G401 (cell line): ENCODE measurements at regions of chr20 and their contacts with region 1.

Region 1: DNA sequence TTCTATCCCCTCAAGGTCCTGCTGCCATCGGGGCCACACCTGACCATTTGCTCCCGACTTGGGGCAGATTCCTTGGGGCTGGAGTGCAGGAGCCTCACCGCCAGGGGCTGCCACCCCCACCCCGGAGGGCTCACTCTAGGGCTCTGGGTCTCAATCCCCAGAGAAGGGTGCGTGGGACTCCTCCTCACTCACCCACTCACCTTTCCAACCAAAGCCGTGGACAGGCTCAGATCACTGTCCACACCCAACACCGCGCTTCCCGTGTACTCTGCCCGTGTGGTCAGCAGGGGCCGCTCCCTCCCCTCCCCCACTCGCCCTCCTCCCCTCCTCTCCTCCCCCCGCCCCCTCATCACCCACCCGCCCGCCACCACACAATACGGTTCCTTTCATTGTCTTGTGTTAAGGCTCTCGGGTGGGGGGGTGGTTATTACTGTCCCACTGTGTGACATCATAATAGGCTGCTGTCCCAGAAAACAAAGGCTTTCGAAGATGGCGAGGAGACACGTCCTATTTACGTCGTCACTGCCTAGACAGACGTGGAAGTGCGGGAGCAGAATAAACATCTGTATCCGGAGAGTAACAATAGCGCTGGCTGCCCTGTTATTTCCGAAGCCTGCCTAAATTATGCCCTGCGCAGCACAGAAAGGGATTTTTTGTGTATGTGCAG is 85.8 kb downstream of the YTHDF1 start:
- DNase-seq: no peak

Region 2: DNA sequence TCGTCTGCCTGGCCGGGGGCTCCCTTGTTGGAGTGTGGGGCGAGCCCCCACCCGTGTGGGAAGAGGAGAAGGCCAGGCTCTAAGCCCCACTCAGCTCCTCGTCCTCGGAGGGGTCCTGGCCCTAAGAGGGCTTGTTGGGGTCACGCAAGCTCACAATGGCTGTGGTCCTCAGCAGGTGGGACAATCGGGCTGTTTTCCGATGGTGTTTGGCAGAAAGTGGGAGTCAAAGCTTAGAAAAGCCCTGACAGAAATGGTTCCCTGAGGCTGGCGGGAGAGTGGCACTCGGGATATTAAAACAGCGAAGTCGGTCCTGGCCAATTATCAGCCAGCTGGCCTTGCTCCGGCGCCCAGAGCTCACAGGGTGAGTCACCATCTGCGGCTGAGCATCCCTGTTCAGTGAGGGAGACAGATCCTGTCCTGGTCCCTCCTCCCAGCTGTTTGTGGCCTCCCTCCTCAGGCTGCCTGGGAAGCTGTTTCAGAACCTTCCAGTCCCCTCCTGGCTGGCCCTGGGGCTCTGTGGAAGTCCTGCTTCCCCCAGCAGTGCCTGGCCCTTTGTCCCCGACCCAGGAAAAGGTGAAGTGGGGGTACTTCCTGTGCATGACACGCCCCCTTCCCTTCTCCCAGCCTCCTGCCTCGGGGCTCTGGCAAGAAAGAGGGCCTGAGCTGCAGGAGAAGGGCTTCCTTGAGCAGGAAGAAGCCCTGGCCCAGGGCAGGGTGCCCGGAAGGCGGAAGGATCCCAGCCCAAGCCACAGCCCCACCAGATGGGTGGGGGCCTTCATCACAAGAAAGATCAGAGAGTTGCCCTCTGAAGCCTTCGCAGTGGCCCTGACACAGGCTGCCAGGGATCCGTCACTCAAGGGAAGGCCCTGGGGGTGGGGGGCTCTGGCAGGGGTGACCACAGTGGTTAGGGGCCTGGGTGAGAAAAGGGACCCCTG is 69.8 kb before region 1 on chr20:
- in situ Hi-C with region 1: loop called (anchors 5 kb)
- DNase-seq: peak; percentile 93